ENCODE measurements at regions of chr19 and their contacts with region 1.

Region 1: DNA sequence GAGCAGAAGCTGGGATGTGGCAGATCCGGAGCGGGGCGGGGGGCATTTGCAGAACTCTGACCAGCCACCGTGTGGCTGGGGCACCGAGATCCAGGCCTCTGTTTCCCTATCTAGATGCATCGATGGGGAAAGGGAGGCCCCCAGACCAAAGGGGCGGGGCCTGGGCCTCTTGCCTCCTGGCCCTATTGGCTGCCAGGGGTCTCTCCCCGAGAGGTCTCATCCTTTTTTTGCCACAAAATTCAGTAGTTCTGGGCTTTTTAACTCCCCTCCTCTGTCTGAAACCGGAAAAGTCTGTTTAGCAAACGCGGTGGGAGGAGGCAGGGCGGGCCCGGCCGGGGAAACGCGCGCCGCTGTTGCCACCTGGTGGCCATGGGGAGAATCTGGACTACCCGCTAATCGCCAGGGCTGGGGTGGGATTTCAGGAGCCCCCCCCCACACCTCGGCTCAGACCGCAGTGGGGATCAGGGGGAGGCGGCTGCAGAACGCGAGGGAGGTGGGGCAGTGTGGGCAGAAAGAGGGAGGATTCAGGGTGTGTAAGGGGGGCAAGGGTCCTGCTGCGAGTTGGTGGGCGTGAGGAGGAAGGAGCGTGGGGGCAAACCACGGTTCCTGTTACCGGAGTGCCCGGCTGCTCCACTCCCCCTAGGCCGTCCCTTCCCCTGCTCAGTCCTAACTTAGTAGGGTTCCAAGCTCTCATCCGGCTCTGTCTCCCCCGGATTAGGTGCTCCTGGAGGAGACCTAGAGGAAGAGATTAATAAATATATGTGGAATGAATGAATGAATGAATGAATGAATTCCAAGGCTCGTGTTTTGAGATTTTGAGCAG is 28.3 kb downstream of the IL12RB1 start:
- DNase-seq: peak; percentile 53 to 92
- H3K4me3 ChIP-seq: peak overlapping the region in 3 of 4 experiments; percentile 28 to 56 (median 42); a peak in 6 of 8 replicates
- H3K27ac ChIP-seq: no peak overlapping the region
- H3K4me1 ChIP-seq: 0 out of 7 replicates have a peak, but pooled peaks cover 0 to 2% (median 0%) of the 10 kb centered on the region in 4 experiments
- H3K27me3 ChIP-seq: no peaks in the 10 kb centered on the region
- CTCF ChIP-seq: peak; percentile 77 to 89 (median 79)
- EP300 ChIP-seq: no peak
- POLR2A ChIP-seq: peak in 1 of 2 experiments; percentile 45; a peak in 1 of 3 replicates
- RAD21 ChIP-seq: peak; percentile 89 to 90

Region 2: GRCh38 chr19:18007044-18007916 is 51.1 kb before region 1 on chr19:
- CTCF ChIA-PET with region 1: interaction called, 34 read pairs
- POLR2A ChIA-PET with region 1: interaction called, 4 read pairs
- DNase-seq: peak in 1 of 2 experiments; percentile 95
- H3K4me3 ChIP-seq: peak overlapping the region; percentile 19 to 75 (median 62); a peak in 7 of 8 replicates
- H3K27ac ChIP-seq: no peak overlapping the region
- H3K4me1 ChIP-seq: peaks cover 0 to 11% (median 4%) of the 10 kb centered on the region in 4 experiments; a peak in 5 of 7 replicates
- H3K27me3 ChIP-seq: peaks cover 0 to under 1% (median under 1%) of the 10 kb centered on the region in 4 experiments; a peak in 2 of 7 replicates
- CTCF ChIP-seq: peak; percentile 94 to 97 (median 95)
- EP300 ChIP-seq: no peak
- POLR2A ChIP-seq: peak in 1 of 2 experiments; percentile 29; a peak in 1 of 3 replicates
- RAD21 ChIP-seq: peak; percentile 97 to 98

Region 3: DNA sequence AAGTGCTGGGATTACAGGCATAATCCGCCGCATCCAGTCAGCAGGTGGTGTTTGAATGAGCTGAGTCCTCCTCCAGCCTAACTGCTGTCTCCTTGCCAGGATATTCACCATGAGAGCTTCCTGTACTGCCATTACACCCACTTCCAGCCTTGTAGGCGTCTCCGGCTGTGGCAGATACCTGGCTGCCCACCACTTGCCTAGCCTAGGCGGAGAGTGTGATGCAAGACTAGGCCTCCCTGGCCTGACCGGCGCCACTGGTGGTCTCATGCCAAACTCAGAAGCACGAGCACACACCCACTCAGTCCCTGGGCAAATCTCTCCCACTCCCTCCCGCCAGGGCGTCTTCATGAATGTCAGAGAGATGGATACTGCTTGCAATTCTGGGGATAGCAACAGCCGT is 11.8 kb after region 1 on chr19:
- CTCF ChIA-PET with region 1: interaction called, 13 read pairs
- POLR2A ChIA-PET with region 1: no interaction called
- DNase-seq: no peak
- H3K4me3 ChIP-seq: no peak overlapping the region
- H3K27ac ChIP-seq: no peak overlapping the region
- H3K4me1 ChIP-seq: no peaks in the 10 kb centered on the region
- H3K27me3 ChIP-seq: no peaks in the 10 kb centered on the region
- CTCF ChIP-seq: no peak
- EP300 ChIP-seq: no peak
- POLR2A ChIP-seq: no peak
- RAD21 ChIP-seq: no peak

Region 4: GRCh38 chr19:18224525-18225354 is 166.3 kb after region 1 on chr19:
- CTCF ChIA-PET with region 1: no interaction called
- POLR2A ChIA-PET with region 1: no interaction called
- DNase-seq: peak; percentile 99
- H3K4me3 ChIP-seq: peak overlapping the region; percentile 54 to 77 (median 68)
- H3K27ac ChIP-seq: peak overlapping the region; percentile 89
- H3K4me1 ChIP-seq: peaks cover 0 to 20% (median 16%) of the 10 kb centered on the region in 4 experiments; a peak in 6 of 7 replicates
- H3K27me3 ChIP-seq: peaks cover 10 to 23% (median 17%) of the 10 kb centered on the region in 4 experiments
- CTCF ChIP-seq: no peak
- EP300 ChIP-seq: no peak
- POLR2A ChIP-seq: no peak
- RAD21 ChIP-seq: no peak